ENCODE measurements at regions of chr11 and their contacts with region 1.

Region 1: DNA sequence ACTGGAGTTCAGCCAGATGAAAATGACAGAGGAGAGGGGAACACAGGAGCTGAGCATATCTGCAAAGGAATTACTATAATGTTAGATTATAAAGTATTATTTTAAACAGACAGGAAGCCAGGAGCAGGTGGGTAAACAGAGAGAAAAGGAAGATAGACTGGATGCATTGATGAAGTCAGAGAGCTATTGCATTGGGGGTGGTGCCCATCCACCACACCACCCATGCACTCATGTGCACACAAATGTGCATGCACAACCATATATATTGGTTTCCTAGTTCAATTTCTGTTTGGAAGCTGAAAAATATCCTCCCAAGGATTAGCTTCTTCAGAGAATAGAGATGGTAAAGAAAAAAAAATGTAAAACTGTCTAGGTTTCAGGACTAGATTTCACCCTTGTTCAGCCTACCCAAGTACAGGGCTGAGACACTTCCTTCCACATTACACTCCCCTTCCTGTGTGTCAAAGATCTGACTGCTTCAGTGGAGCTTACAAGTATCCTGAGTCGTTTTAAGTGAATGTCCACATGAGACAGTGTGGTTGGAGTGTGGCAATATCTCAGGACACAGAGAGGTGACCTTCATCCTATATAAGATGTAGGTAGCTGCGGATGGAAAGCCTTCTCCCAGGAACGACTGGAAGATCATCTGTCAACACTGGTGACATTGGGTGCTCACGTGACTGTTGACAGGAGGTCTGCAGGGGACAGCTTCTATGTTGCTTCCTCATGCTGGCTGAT is 12.2 kb upstream of the SMPD1 start:
- DNase-seq: no peak
- ATAC-seq: peak; percentile 39; the same call in 1 of the 2 replicates
- H3K4me3 ChIP-seq: no peak overlapping the region
- H3K27ac ChIP-seq: no peak overlapping the region
- H3K4me1 ChIP-seq: no peaks in the 10 kb centered on the region
- H3K27me3 ChIP-seq: peaks cover 2% of the 10 kb centered on the region
- CTCF ChIP-seq: no peak
- POLR2A ChIP-seq: no peak
- RAD21 ChIP-seq: no peak

Region 2: DNA sequence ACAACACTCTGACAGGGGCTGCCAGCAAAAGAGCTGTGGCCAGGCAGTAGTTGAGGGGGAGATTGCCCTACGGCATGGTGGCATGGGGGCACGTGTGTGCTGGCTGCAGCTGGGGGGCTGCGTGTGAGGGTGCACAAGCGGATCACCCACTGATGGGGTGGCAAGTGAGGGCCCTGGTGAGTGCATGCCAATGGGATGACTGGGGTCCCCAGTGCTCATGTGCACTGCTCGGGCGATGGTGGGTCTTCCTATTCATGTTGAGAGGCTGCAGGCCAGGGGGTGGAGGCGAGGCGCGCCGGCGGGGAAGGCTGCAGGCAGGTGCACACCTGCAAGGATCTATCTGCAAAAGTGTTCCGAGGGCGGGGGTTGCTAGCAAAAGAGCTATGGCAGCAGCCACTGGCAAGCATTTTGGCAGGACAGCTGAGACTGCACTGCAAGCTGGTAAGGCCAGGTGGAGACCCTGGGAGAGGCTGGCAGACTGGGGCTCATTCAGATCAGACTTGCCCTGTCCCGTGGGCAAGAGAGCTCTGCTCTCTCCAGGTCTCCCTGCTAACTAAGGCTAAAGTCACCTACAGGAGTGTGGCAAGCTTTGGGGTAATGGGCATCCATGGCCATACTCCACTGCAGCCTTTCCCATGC is 917.0 kb before region 1 on chr11:
- CTCF ChIA-PET with region 1: no interaction called
- POLR2A ChIA-PET with region 1: no interaction called
- dilution Hi-C with region 1: no loop called
- in situ Hi-C with region 1: no loop called
- intact Hi-C with region 1: no loop called
- DNase-seq: no peak
- ATAC-seq: no peak
- H3K4me3 ChIP-seq: no peak overlapping the region
- H3K27ac ChIP-seq: no peak overlapping the region
- H3K4me1 ChIP-seq: no peaks in the 10 kb centered on the region
- H3K27me3 ChIP-seq: no peaks in the 10 kb centered on the region
- CTCF ChIP-seq: no peak
- POLR2A ChIP-seq: no peak
- RAD21 ChIP-seq: no peak

Region 3: GRCh38 chr11:6362873-6363678 is 15.0 kb before region 1 on chr11:
- CTCF ChIA-PET with region 1: interaction called, 13 read pairs
- POLR2A ChIA-PET with region 1: no interaction called
- dilution Hi-C with region 1: no loop called
- in situ Hi-C with region 1: no loop called
- intact Hi-C with region 1: no loop called
- DNase-seq: peak; percentile 77
- ATAC-seq: peak; percentile 99
- H3K4me3 ChIP-seq: no peak overlapping the region
- H3K27ac ChIP-seq: no peak overlapping the region
- H3K4me1 ChIP-seq: 0 out of 2 replicates have a peak, but pooled peaks cover 2% of the 10 kb centered on the region
- H3K27me3 ChIP-seq: peaks cover 3% of the 10 kb centered on the region
- CTCF ChIP-seq: peak; percentile 96
- POLR2A ChIP-seq: no peak
- RAD21 ChIP-seq: peak; percentile 93

Region 4: DNA sequence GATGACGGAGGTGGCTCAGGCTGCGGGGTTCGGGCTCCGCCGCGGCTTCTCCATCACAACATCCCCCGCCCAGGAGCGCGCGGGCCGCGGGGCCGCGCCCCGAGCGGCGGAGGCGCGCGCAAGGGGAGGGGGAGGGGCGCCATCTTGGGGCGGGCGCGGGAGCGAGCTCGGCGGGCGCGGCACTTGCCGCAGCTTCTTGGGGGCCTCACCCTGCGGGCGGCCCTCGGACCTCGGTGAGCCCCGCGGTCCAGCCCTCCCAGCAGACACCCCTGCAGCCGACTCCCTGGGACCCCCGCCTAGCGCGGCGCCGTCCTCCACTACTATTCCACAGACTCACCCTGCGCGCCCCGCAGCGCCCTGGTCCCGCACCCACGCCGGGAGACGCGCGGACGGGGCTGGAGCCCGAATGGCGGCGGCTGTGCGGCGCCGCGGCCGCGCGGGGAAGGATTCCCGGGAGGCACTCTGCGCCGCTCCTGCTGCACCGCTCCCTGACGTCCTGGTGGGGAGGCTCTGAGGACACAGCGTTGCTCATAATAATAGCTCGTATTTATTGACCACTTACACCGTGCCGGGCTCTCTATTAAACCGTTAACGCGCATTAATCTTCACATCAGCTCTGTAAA is 41.0 kb after region 1 on chr11 and contains the start of gene APBB1:
- CTCF ChIA-PET with region 1: interaction called, 10 read pairs
- POLR2A ChIA-PET with region 1: no interaction called
- dilution Hi-C with region 1: no loop called
- in situ Hi-C with region 1: no loop called
- intact Hi-C with region 1: no loop called
- DNase-seq: peak; percentile 48
- ATAC-seq: peak; percentile 87
- H3K4me3 ChIP-seq: peak within 1 kb of the TSS; percentile 96
- H3K27ac ChIP-seq: peak within 1 kb of the TSS; percentile 57; the same call in 1 of the 2 replicates
- H3K4me1 ChIP-seq: peaks cover 10% of the 10 kb centered on the region
- H3K27me3 ChIP-seq: peaks cover 4% of the 10 kb centered on the region; the same call in 1 of the 2 replicates
- CTCF ChIP-seq: 0 out of 2 replicates have a peak, but pooled peaks have one; percentile 12
- POLR2A ChIP-seq: no peak
- RAD21 ChIP-seq: peak; percentile 24; the same call in 1 of the 2 replicates
- total RNA-seq, gene APBB1: 39.4 and 40.3 TPM in 2 replicates

Region 5: GRCh38 chr11:6452219-6452618 is 74.1 kb after region 1 on chr11:
- CTCF ChIA-PET with region 1: interaction called, 10 read pairs
- POLR2A ChIA-PET with region 1: no interaction called
- dilution Hi-C with region 1: no loop called
- in situ Hi-C with region 1: no loop called
- intact Hi-C with region 1: no loop called
- DNase-seq: peak; percentile 19
- ATAC-seq: peak; percentile 51
- H3K4me3 ChIP-seq: no peak overlapping the region
- H3K27ac ChIP-seq: no peak overlapping the region
- H3K4me1 ChIP-seq: no peaks in the 10 kb centered on the region
- H3K27me3 ChIP-seq: no peaks in the 10 kb centered on the region
- CTCF ChIP-seq: no peak
- POLR2A ChIP-seq: no peak
- RAD21 ChIP-seq: no peak

Region 6: DNA sequence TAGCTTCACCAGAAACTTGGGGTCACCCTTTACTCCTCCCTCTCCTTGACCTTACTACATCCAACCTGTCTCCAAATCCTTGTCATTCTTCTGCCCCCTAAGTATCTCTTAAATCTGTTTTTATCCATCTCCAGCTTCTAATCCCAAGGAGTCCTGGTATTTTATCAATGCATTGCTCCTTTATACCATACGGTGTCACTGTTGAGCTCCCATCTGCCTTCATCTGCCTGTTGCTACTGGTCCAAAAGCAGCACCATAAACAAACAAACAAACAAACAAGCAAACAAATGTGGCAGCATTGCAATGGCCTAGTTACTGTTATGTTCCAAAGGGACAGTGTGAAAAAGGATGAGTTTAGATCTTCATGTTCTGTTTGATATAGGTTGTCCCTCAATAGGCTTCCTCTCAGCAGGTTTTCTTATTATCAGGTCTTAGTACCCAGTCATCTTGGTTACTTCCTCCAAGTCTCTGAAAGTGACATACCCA is 153.2 kb after region 1 on chr11:
- CTCF ChIA-PET with region 1: interaction called, 4 read pairs
- POLR2A ChIA-PET with region 1: no interaction called
- dilution Hi-C with region 1: no loop called
- in situ Hi-C with region 1: no loop called
- intact Hi-C with region 1: loop called (anchors 5 kb)
- DNase-seq: peak; percentile 52
- ATAC-seq: peak; percentile 95
- H3K4me3 ChIP-seq: no peak overlapping the region
- H3K27ac ChIP-seq: no peak overlapping the region
- H3K4me1 ChIP-seq: no peaks in the 10 kb centered on the region
- H3K27me3 ChIP-seq: no peaks in the 10 kb centered on the region
- CTCF ChIP-seq: peak; percentile 74
- POLR2A ChIP-seq: no peak
- RAD21 ChIP-seq: peak; percentile 83

Region 7: DNA sequence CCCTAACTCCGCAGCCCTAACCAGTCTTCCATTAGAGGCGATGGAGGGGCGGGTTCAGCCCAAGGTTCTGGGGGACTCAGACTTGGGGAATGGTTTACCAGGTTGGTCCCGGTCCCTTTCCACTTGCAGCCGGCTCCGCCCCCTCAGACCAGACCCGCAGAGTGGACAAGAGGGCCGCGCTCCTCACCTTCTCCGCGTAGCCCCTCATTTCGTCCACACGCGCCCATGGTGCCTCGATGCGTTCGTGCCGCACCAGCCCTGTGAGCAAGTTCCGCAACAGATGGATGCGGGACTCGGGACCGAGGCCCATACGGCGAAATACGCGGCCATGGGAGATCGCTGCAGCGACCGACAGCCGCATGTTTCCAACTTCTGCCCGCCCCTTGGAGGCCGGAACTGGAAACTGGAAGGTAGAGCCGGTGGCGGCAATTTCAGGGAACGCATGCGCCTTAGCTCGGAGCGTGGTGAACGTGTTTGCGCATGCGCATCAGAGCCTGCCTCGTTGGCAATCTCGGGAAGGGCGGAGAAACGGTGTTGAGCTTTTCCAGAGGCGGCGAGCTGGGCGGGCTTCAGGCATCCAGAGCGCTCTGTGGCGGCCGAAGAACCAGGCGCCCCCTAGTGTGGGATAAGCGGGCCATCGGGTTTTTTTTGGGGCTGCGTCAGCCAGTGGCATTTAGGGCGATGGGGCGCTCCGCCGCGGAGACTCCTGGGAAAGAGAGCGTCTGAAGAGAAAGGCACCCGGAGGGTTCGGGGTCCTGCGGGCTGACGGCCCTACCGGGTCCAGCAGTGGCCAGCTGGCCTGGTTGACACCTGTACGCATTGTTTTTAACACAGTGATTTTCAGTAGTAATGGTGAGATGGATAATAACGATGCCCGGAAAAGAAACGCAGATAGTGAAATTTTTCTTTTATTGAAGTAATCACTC is 305.1 kb after region 1 on chr11 and contains the start of gene MRPL17:
- CTCF ChIA-PET with region 1: interaction called, 7 read pairs
- POLR2A ChIA-PET with region 1: no interaction called
- dilution Hi-C with region 1: no loop called
- in situ Hi-C with region 1: loop called (anchors 10 kb)
- intact Hi-C with region 1: loop called (anchors 5 kb)
- DNase-seq: peak; percentile 98
- ATAC-seq: peak; percentile 96
- H3K4me3 ChIP-seq: peak within 1 kb of the TSS; percentile 77
- H3K27ac ChIP-seq: peak within 1 kb of the TSS; percentile 86
- H3K4me1 ChIP-seq: peaks cover 5% of the 10 kb centered on the region
- H3K27me3 ChIP-seq: no peaks in the 10 kb centered on the region
- CTCF ChIP-seq: peak; percentile 96
- POLR2A ChIP-seq: peak; percentile 72; the same call in 1 of the 2 replicates
- RAD21 ChIP-seq: peak; percentile 83
- total RNA-seq, gene MRPL17: 65.8 and 70.3 TPM in 2 replicates

Measured in IMR-90 (cell line).